Cardiac septum (tissue), 1 donor: ENCODE measurements at regions of chr3 and their contacts with region 1.

Region 1: DNA sequence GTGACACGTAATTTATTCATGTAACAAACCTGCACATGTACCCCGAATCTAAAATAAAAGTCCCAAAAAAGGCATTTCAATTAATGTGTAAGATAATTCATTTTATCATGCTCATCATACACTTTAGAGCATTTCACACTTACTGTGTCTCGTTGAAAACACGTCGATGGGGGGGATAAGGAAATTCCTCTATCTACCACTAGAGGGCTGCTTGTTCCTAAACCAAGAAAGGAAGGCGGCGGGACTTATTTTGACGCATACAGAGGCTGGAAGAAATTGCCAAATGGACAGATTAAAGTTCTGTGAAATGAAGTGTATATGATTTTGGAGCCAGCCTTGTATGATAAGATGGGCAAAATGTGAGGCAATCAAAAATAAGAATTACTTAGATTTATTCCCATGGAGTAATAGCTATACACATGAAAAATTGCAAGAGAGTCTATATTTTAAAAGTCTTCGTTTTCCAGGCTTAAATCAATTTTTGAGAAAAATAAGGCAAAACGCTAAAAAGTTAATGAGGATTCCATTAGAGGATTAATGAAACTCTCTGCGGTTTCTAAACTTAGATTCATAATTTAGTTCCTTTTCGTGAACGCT is 346.8 kb downstream of the CNTN3 start:
- DNase-seq: no peak

Region 2: GRCh38 chr3:73868688-73869315 is 398.9 kb before region 1 on chr3:
- intact Hi-C with region 1: loop called (anchors 10 kb)
- DNase-seq: no peak

Region 3: GRCh38 chr3:75171630-75172230 is 904.0 kb after region 1 on chr3:
- intact Hi-C with region 1: loop called (anchors 10 kb)
- DNase-seq: no peak